GM12878 (cell line): ENCODE measurements at regions of chr6 and their contacts with region 1.

Region 1: GRCh38 chr6:87322304-87323212 is at the start of gene SMIM8:
- DNase-seq: peak; percentile 24
- ATAC-seq: peak; percentile 99
- H3K4me3 ChIP-seq: peak within 1 kb of the TSS; percentile 96
- H3K27ac ChIP-seq: peak within 1 kb of the TSS; percentile 71
- H3K4me1 ChIP-seq: no peaks in the 10 kb centered on the region
- H3K27me3 ChIP-seq: no peaks in the 10 kb centered on the region
- CTCF ChIP-seq: peak; percentile 92 to 97 (median 97)
- EP300 ChIP-seq: no peak
- POLR2A ChIP-seq: peak; percentile 88
- RAD21 ChIP-seq: peak; percentile 34
- polyA plus RNA-seq, gene SMIM8: 33.9 to 45.8 TPM

Region 2: GRCh38 chr6:87472525-87473418 is 150.2 kb after region 1 on chr6 and contains the start of gene SLC35A1:
- CTCF ChIA-PET with region 1: no interaction called
- POLR2A ChIA-PET with region 1: no interaction called
- RAD21 ChIA-PET with region 1: no interaction called
- SMC1A ChIA-PET with region 1: no interaction called
- in situ Hi-C with region 1: no loop called
- intact Hi-C with region 1: loop called (anchors 1 kb)
- DNase-seq: peak; percentile 65
- ATAC-seq: peak; percentile 94
- H3K4me3 ChIP-seq: peak within 1 kb of the TSS; percentile 97
- H3K27ac ChIP-seq: peak within 1 kb of the TSS; percentile 72
- H3K4me1 ChIP-seq: no peaks in the 10 kb centered on the region
- H3K27me3 ChIP-seq: no peaks in the 10 kb centered on the region
- CTCF ChIP-seq: 0 out of 6 replicates have a peak, but pooled peaks of 1 of the 3 experiments have one; percentile 6
- EP300 ChIP-seq: no peak
- POLR2A ChIP-seq: peak; percentile 89
- RAD21 ChIP-seq: no peak
- polyA plus RNA-seq, gene SLC35A1: 15.1 to 28.0 TPM